ENCODE measurements at regions of chr3 and their contacts with region 1.

Region 1: DNA sequence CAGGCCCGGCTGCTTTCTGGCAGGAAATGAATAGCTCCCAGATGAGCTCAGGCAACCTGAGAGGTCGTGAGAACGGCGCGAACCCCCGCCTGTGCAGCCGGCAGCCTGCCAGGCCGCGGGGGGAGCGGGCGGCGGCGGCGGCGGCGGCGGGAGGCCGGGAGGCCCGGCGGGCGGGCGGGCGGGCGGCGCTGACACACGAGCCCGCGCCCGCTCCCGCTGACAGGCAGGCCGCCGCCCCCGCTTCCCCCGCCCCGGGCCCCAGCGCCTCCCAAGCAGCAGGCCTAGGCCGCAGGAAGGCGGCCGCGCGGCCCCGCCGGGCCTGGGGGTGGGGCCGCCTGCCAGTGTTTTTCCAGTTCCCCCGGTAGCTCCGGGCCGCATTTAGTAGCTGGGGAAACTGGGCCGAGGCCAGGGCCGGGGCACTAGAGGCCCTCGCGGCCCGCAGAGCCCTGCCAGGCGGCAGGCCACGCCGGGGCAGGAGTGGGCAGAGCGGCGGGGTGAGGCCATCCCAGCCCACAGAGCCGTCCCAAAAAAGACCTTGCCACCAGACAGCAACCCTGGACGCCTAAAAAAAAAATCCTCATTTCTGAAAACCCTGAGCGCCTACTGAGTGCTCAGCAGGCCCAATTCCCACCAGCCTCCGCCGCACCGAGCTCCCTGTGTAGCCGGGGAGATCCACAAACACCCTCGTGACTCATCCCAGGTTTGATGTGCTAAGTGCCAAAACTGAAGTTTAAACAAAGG is 5.6 kb downstream of the HES1 start:
- DNase-seq: peak; percentile 75
- ATAC-seq: peak; percentile 20
- H3K4me3 ChIP-seq: peak overlapping the region in 4 of 5 experiments; percentile 2 to 52 (median 52)
- H3K4me3 Mint-ChIP-seq: peak overlapping the region; percentile 75
- H3K27ac ChIP-seq: peak overlapping the region in 1 of 2 donors; percentile 27
- H3K27ac Mint-ChIP-seq: peak overlapping the region; percentile 27
- H3K4me1 ChIP-seq: peaks cover 34 to 44% of the 10 kb centered on the region in 2 donors
- H3K4me1 Mint-ChIP-seq: peaks cover 37% of the 10 kb centered on the region
- H3K27me3 ChIP-seq: peaks cover 0 to 20% (median 4%) of the 10 kb centered on the region in 4 experiments
- H3K27me3 Mint-ChIP-seq: peaks cover 5% of the 10 kb centered on the region
- CTCF ChIP-seq: no peak

Region 2: DNA sequence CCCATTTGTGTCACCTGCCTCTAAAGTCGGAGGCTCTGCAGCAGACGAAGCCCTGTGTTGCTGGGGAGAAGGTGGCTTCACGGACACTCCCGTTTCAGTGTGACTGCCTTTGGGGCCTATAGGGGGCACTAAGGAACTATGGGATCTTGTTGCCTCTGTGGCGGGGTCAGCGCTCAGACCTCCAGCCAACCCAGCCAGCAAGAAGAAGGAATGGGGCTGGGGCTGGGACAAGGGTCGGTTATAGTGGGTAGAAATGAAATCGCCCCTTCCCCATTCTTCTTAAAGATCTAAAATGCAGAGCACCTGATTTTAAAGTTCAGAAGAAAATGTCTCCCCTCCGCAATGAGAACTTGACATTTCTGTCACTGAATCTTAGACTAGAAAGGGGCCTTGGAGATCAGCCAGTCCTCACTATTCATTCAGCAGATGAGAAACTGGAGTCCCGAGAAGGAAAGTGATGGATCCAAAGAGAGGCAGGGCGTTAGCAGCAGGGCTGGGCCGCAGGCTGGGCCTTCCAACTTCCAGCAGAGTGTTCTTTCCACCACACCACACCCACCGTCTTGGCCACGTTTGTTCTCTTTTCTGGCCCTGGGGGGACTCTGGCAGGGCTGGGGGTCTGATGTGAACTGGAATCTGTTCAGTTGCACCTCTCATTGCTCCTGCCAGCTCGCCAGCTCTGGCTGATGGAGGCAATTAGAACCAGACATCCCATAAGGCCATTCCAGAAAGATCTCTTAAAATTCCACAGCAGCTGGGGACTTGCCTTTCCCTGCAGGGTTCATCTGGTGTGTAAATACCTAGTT is 353.2 kb before region 1 on chr3:
- CTCF ChIA-PET with region 1: interaction called, 83 read pairs
- POLR2A ChIA-PET with region 1: no interaction called
- intact Hi-C with region 1: loop called (anchors 1 kb)
- DNase-seq: peak; percentile 79
- ATAC-seq: peak; percentile 88
- H3K4me3 ChIP-seq: no peak overlapping the region
- H3K4me3 Mint-ChIP-seq: no peak overlapping the region
- H3K27ac ChIP-seq: no peak overlapping the region
- H3K27ac Mint-ChIP-seq: peak overlapping the region; percentile 57
- H3K4me1 ChIP-seq: peaks cover 12 to 17% of the 10 kb centered on the region in 2 donors
- H3K4me1 Mint-ChIP-seq: peaks cover 14% of the 10 kb centered on the region
- H3K27me3 ChIP-seq: peaks cover 0 to 44% (median 5%) of the 10 kb centered on the region in 4 experiments
- H3K27me3 Mint-ChIP-seq: peaks cover 54% of the 10 kb centered on the region
- CTCF ChIP-seq: peak; percentile 82

Region 3: DNA sequence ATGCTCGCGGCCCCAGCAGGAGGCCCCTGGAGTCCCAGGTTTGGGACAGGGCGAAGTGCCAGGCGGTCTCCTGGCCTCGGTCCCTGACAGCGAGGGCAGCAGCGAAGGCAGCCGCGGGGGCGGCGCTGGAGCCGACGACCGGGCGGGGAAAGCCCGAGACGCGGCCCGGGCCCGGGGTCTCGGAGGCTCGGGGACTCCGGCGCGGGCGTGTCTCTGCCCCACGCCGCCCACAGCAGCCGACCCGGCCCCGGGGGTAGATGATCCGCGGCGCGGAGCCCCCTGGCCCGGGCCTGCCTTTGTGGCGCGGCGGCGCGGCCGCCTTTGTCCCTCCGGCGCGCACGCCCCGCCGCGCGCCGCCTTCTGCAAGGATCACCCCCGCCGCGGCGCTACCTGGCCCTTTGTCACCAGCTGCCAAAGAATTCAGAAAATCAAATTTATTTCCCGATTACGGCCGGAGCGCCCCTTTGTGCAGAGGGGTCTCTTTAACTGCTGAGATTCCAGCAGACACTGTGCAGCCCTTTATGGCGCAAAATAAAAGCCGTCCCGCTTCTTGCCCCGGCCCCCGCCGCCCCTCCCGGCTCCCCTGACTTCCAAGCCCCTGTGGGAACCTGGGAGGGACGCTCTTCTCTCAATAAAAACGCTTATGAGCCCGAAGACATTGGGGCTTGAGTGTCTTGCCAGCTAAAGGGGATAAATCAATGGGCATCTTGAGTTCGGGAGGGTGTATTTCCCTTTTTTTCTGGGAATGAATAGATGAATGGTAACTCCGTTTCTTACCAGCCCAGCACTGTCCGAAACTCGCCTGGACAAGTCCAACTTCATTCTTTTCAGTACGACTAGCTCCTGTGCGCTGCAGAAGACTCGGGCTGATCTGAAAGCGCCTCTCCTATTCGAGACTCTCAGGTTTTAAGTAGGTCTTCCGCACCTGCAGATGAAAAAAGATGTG is 62.7 kb after region 1 on chr3:
- CTCF ChIA-PET with region 1: no interaction called
- POLR2A ChIA-PET with region 1: no interaction called
- intact Hi-C with region 1: loop called (anchors 5 kb)
- DNase-seq: no peak
- ATAC-seq: peak; percentile 42
- H3K4me3 ChIP-seq: peak overlapping the region in 4 of 5 experiments; percentile 16 to 63 (median 48)
- H3K4me3 Mint-ChIP-seq: peak overlapping the region; percentile 81
- H3K27ac ChIP-seq: no peak overlapping the region
- H3K27ac Mint-ChIP-seq: no peak overlapping the region
- H3K4me1 ChIP-seq: peaks cover 33 to 34% of the 10 kb centered on the region in 2 donors
- H3K4me1 Mint-ChIP-seq: peaks cover 28% of the 10 kb centered on the region
- H3K27me3 ChIP-seq: peaks cover 0 to 63% (median 32%) of the 10 kb centered on the region in 4 experiments
- H3K27me3 Mint-ChIP-seq: peaks cover 44% of the 10 kb centered on the region
- CTCF ChIP-seq: no peak

Measured in B cell (primary cell).